ENCODE measurements at regions of chr7 and their contacts with region 1.

Region 1: GRCh38 chr7:151091431-151091830 is 5.2 kb downstream of the AGAP3 start:
- DNase-seq: peak; percentile 69
- H3K4me3 ChIP-seq: no peak overlapping the region
- H3K27ac ChIP-seq: peak overlapping the region in 1 of 4 donors; percentile 11
- H3K4me1 ChIP-seq: peaks cover 20 to 50% (median 36%) of the 10 kb centered on the region in 4 donors
- H3K27me3 ChIP-seq: no peaks in the 10 kb centered on the region
- CTCF ChIP-seq: peak; percentile 43 to 58 (median 52)
- EP300 ChIP-seq: no peak
- POLR2A ChIP-seq: no peak

Region 2: DNA sequence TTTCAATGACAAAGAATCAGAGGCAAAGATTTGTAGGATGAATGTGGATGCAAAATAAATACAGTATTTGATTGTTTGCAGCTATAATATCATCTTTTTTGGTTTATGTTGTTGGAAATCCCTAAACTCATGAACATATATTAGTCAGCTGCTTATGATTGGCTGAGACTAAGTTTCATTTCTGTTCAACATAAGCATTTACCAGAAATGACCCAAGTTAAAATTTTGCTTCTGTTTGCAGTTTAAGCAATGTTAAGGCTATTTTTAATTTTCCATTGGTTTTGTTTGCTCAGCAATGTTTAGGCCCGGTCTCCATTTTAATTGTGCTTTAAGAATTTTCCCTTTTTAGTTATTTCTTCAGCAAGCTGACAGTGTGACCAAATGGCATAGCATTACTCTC is 481.2 kb before region 1 on chr7:
- in situ Hi-C with region 1: no loop called
- intact Hi-C with region 1: loop called (anchors 5 kb)
- DNase-seq: no peak
- H3K4me3 ChIP-seq: no peak overlapping the region
- H3K27ac ChIP-seq: no peak overlapping the region
- H3K4me1 ChIP-seq: no peaks in the 10 kb centered on the region
- H3K27me3 ChIP-seq: no peaks in the 10 kb centered on the region
- CTCF ChIP-seq: no peak
- EP300 ChIP-seq: no peak
- POLR2A ChIP-seq: no peak

Region 3: GRCh38 chr7:151524306-151524705 is 432.9 kb after region 1 on chr7:
- in situ Hi-C with region 1: no loop called
- intact Hi-C with region 1: no loop called
- DNase-seq: no peak
- H3K4me3 ChIP-seq: no peak overlapping the region
- H3K27ac ChIP-seq: no peak overlapping the region
- H3K4me1 ChIP-seq: peaks cover 0 to 9% (median 7%) of the 10 kb centered on the region in 4 donors
- H3K27me3 ChIP-seq: no peaks in the 10 kb centered on the region
- CTCF ChIP-seq: no peak
- EP300 ChIP-seq: no peak
- POLR2A ChIP-seq: no peak

Measured in transverse colon (tissue), 4 donors.